ENCODE measurements at regions of chr12 and their contacts with region 1.

Region 1: GRCh38 chr12:99948370-99948769 is 36.4 kb downstream of the ANKS1B start:
- DNase-seq: no peak
- H3K4me3 ChIP-seq: no peak overlapping the region
- CTCF ChIP-seq: no peak
- POLR2A ChIP-seq: no peak

Region 2: DNA sequence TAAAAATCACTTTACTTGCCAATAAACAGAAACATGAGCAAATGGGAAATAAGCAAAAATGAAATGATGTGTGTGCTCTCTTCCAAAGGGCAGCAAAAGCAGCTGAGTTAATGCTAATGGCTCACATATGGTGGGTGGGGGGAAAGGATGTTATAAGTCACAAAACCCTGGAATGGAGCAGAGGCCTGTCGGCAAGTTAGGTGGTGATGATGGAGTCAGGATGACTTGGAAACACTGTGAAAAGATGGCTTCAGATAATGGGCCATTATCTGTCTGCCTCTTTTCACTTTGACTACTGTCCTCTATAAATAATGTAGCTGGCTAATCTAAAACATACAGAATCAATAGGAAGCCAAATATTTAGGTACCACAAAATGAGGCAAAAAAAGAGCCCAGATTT is 1074.6 kb before region 1 on chr12:
- intact Hi-C with region 1: no loop called
- DNase-seq: no peak
- H3K4me3 ChIP-seq: no peak overlapping the region
- CTCF ChIP-seq: no peak
- POLR2A ChIP-seq: no peak

Region 3: GRCh38 chr12:99975321-99975720 is 27.0 kb after region 1 on chr12:
- intact Hi-C with region 1: loop called (anchors 2 kb)
- DNase-seq: no peak
- H3K4me3 ChIP-seq: no peak overlapping the region
- CTCF ChIP-seq: no peak
- POLR2A ChIP-seq: no peak